ENCODE measurements at regions of chr12 and their contacts with region 1.

Region 1: DNA sequence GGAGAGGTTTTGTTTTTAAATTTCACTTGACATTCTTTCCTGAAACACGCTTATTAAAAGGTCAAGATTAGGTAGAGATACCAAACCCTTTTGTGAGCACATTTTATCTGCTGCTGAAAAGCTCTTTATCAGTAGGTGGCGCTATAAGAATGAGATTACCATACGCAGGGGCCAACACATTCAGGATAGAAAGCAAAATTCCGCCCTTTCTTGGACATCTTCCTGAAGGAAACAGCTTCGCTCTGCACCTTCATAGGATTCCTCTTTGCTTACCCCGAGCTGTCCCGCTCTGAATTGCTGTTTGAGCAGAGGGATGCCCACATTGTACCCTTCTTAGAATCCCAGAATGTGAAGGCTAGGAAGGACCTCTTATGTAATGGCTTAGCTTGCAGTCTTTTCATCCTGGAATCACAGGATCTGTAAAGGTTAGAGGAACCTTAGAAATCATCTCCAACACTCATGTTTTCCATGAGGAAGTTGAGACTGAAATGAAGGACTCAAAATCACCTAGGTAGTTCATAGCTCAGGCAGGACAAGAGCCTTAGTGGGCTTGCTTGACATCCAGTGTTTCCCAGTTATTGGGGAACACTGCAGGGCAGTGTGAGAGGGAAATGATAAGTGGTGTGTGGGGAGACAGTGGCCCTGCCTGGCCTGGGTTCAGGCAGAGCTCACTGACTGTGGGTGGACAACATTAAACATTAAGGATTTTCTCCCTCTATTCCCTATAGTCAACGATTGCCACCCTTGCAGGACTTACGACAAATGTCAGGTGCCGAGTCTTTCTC is 38.7 kb upstream of the CRY1 start:
- DNase-seq: peak in 1 of 5 donors; percentile 18
- ATAC-seq: peak in 3 of 4 donors; percentile 44 to 65 (median 54)
- H3K4me3 ChIP-seq: no peak overlapping the region
- H3K27ac ChIP-seq: no peak overlapping the region
- H3K4me1 ChIP-seq: peaks cover 0 to 6% (median 0%) of the 10 kb centered on the region in 12 donors
- H3K27me3 ChIP-seq: peaks cover 0 to 8% (median 0%) of the 10 kb centered on the region in 9 donors
- CTCF ChIP-seq: peak; percentile 53 to 88 (median 75)
- POLR2A ChIP-seq: no peak

Region 2: DNA sequence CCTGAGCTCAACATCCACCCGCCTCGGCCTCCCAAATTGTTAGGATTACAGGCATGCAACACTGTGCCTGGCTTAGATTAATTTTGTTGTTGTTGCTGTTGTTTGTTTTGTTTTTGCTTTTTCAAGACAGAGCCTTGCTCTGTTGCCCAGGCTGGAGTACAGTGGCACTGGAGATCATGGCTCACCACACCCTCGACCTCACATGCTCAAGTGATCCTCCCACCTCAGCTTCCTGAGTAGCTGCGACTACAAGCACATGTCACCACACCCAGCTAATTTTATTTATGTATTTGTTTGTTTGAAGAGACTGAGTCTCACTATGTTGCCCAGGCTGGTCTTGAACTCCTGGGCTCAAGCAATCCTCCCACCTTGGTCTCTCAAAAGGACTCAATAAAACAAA is 65.3 kb before region 1 on chr12:
- intact Hi-C with region 1: no loop called
- DNase-seq: no peak
- ATAC-seq: no peak
- H3K4me3 ChIP-seq: no peak overlapping the region
- H3K27ac ChIP-seq: no peak overlapping the region
- H3K4me1 ChIP-seq: no peaks in the 10 kb centered on the region
- H3K27me3 ChIP-seq: no peaks in the 10 kb centered on the region
- CTCF ChIP-seq: no peak
- POLR2A ChIP-seq: no peak

Region 3: GRCh38 chr12:107169200-107169599 is 37.2 kb after region 1 on chr12:
- intact Hi-C with region 1: no loop called
- DNase-seq: no peak
- ATAC-seq: no peak
- H3K4me3 ChIP-seq: no peak overlapping the region
- H3K27ac ChIP-seq: no peak overlapping the region
- H3K4me1 ChIP-seq: no peaks in the 10 kb centered on the region
- H3K27me3 ChIP-seq: peaks cover 0 to 19% (median 4%) of the 10 kb centered on the region in 9 donors
- CTCF ChIP-seq: no peak
- POLR2A ChIP-seq: no peak

Region 4: DNA sequence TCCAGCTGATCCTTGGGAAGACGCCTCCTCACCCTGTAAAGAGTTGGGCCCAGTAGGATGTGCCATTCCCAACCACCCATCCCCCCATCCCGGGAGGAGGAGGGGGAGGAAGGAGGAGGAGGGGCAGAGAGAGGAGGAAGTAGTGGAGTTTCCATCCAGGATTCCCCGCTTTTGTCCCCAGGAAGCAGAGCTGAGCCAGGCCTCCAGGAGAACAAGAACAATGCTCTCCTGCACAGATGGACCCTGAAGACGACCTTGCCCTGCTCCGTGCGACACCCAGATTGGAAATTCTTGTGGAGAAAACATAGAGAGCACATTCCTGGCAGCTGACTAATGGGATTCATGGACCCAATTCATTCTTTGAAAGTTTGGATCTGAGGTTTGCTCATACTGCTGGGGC is 93.6 kb after region 1 on chr12:
- intact Hi-C with region 1: no loop called
- DNase-seq: no peak
- ATAC-seq: no peak
- H3K4me3 ChIP-seq: no peak overlapping the region
- H3K27ac ChIP-seq: no peak overlapping the region
- H3K4me1 ChIP-seq: no peaks in the 10 kb centered on the region
- H3K27me3 ChIP-seq: peaks cover 0 to 29% (median under 1%) of the 10 kb centered on the region in 9 donors
- CTCF ChIP-seq: no peak
- POLR2A ChIP-seq: no peak

Region 5: DNA sequence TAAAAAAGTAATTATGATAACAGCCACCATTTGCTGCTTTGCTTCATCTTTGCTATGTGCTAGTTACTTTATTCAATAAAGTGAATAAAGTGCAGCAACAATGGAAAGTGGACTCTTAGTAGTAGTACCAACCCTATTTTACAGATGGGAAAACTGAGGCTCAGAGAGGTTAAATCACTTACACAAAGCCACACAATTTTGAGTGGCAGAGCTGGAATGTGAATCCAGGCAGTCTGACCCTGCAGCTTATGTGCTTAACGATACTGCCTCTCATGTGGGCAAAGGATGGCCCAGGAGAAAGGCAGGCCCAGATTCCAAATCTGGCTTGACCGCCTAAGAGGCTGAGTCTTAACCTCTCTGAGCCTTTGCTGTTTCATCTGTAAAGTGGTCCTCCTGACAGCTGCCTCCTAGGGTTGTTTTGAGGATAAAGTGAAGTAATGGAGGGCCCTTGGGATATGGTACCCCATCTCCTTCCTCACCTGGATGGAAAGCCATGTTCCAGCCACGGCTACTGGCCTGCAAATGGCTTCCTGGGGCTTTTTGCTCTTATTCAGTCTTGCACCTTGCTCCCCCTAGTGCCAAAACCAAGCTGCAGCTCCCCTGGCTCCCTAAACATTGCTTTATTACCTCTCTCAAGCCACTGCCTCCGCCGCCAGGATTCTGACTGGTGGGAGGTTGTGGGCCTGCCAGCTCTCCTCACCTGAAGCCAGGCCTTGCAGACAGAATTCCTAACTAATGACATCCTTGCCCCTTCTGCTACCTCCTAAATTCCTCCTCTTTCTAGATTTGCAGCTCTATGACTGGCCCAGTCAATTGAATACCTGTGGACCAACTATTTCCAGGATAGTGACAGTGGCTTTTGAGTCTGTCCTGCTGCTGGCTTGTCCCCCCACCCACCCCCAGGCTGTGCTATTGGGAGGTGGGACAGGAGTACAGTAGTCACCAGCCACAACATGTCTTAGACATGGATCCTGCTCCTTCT is 270.3 kb after region 1 on chr12:
- intact Hi-C with region 1: loop called in 7 of 10 experiments (anchors 2 to 10 kb)
- DNase-seq: peak in 2 of 5 donors; percentile 22 to 28
- ATAC-seq: peak in 1 of 4 donors; percentile 54
- H3K4me3 ChIP-seq: no peak overlapping the region
- H3K27ac ChIP-seq: no peak overlapping the region
- H3K4me1 ChIP-seq: peaks cover 0 to 3% (median 0%) of the 10 kb centered on the region in 12 donors
- H3K27me3 ChIP-seq: no peaks in the 10 kb centered on the region
- CTCF ChIP-seq: peak in 11 of 12 donors; percentile 12 to 55 (median 37)
- POLR2A ChIP-seq: no peak